GM10248 (cell line): ENCODE measurements at regions of chr2 and their contacts with region 1.

Region 1: GRCh38 chr2:36538335-36538734 is 59.6 kb downstream of the FEZ2 start:
- DNase-seq: no peak
- CTCF ChIP-seq: no peak

Region 2: DNA sequence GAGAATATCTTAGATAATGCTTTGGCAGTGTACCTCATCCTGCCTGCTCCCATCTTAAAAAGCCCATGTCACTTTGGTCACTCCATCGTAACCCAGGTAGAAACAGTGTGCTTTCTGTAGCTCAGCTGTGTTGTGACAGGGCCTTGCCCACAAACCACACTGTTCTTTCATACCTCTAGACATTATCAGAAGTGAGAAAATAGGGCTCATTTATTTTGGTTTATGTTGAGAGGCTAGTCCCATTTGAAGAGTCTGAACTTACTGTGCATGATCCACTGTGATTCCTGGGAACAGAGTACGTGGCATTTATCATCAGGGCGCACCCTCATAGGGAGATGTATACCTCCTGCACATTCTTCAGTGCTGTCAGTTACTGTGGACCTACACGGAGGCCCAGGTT is 10.1 kb before region 1 on chr2:
- CTCF ChIA-PET with region 1: interaction called, 10 read pairs
- POLR2A ChIA-PET with region 1: no interaction called
- DNase-seq: no peak
- CTCF ChIP-seq: no peak

Region 3: DNA sequence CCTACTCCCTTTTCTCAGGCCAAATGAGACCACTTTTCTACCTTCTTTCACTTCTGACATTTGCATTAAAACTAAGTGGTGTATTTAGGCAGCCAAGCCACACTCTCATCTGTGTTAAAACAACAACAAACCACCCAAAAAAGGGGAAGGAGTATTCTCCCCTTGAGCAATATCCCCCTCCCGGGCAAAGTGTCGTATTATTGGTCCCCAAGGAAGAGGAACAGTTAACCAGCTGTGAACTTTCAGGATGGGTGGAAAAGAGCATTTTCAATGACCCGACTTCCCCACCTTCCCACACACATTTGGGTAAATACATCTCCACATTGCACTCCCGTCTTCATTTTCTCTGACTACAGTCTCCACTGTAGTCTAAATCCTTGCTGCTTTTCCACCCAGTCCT is 15.3 kb after region 1 on chr2:
- CTCF ChIA-PET with region 1: interaction called, 10 read pairs
- POLR2A ChIA-PET with region 1: no interaction called
- DNase-seq: no peak
- CTCF ChIP-seq: no peak